GM10248 (cell line): ENCODE measurements at regions of chr5 and their contacts with region 1.

Region 1: GRCh38 chr5:112707187-112708102 is 30.2 kb upstream of the APC start:
- DNase-seq: peak; percentile 98
- CTCF ChIP-seq: no peak

Region 2: DNA sequence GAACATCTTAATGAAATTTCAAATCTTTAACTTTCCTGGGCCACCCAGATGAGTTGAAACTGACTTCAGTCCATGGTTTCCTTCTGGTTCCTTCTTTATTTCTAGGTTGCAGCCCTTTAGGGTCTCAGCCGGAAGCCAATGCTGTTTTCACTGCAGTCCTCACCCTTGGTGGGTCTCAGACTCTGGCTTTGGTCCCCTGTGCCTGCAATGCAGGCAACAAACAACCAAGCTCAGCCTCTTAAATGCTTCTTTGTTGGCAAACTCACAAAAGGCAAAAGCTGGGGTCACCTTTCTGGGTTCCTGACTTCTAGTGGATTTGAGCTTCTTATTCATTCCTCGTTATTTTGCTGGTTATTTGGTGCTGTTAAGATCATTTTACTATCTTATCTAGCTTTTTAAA is 10.9 kb after region 1 on chr5:
- CTCF ChIA-PET with region 1: interaction called, 22 read pairs
- POLR2A ChIA-PET with region 1: no interaction called
- DNase-seq: no peak
- CTCF ChIP-seq: no peak

Region 3: DNA sequence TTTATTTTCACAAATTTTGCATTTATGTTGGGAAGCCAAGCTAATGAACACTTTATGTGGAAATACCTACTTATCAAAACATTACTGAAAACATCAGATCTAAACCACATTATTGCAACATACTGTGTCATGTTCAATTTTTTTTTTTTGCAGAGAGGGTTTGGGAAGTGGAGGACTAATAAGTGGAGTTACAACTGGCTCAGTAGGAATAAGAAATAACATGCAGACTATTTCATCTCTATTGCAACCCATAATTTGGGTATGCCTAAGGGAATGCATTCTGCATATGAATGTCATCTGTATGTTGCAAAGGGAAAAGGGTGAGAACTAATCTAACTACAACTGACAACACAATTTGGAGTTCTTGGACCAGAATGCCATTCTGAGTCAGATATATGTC is 72.1 kb after region 1 on chr5:
- CTCF ChIA-PET with region 1: no interaction called
- POLR2A ChIA-PET with region 1: no interaction called
- DNase-seq: no peak
- CTCF ChIP-seq: no peak